Ascending aorta (tissue), 2 donors: ENCODE measurements at regions of chr2 and their contacts with region 1.

Region 1: GRCh38 chr2:42828487-42829425 is 36.4 kb upstream of the HAAO start:
- DNase-seq: peak in 1 of 2 donors; percentile 83
- H3K4me3 ChIP-seq: no peak overlapping the region
- H3K27ac ChIP-seq: peak overlapping the region; percentile 11 to 56
- H3K4me1 ChIP-seq: peaks cover 0 to 17% of the 10 kb centered on the region in 2 donors
- H3K27me3 ChIP-seq: no peaks in the 10 kb centered on the region
- CTCF ChIP-seq: peak; percentile 87 to 94 (median 91)

Region 2: GRCh38 chr2:42859006-42859552 is 30.3 kb after region 1 on chr2:
- intact Hi-C with region 1: no loop called
- DNase-seq: peak in 1 of 2 donors; percentile 88
- H3K4me3 ChIP-seq: no peak overlapping the region
- H3K27ac ChIP-seq: peak overlapping the region in 1 of 2 donors; percentile 34
- H3K4me1 ChIP-seq: peaks cover 5 to 6% of the 10 kb centered on the region in 2 donors
- H3K27me3 ChIP-seq: no peaks in the 10 kb centered on the region
- CTCF ChIP-seq: peak; percentile 89 to 91 (median 90)

Region 3: DNA sequence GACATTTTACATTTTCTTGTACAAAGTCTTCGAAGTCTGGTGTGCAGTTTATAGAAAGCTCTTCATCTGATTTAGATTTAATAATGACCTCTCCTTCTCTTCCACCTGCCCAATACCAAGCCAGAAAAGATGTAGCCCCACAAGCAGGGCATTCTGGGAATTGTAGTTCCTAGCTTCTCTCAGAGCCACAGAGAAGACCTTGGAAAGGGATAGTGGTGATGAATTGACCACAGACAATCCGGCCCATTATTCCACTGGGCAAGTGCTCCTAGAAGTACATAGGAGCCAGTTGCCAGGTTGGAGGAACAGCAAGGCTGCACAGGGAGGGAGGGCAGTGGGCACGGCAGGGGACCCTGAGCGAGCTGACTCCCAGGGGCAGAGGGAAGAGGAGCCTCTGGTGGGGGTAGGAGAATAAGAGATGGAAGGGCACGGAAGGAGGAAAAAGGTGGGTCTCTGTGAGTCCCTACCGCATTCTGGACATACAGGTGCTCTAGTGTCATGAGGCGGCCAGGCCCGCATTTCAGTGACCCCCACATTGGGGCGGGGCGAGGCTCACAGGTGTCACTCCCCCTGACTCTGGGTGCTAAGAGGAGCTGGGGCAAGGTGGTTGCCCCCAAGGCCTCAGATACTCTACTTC is 116.1 kb after region 1 on chr2:
- intact Hi-C with region 1: loop called (anchors 5 kb)
- DNase-seq: no peak
- H3K4me3 ChIP-seq: no peak overlapping the region
- H3K27ac ChIP-seq: no peak overlapping the region
- H3K4me1 ChIP-seq: peaks cover 0 to 3% of the 10 kb centered on the region in 2 donors
- H3K27me3 ChIP-seq: no peaks in the 10 kb centered on the region
- CTCF ChIP-seq: no peak

Region 4: GRCh38 chr2:43484323-43484930 is 655.7 kb after region 1 on chr2:
- intact Hi-C with region 1: loop called (anchors 2 kb)
- DNase-seq: no peak
- H3K4me3 ChIP-seq: no peak overlapping the region
- H3K27ac ChIP-seq: peak overlapping the region in 1 of 2 donors; percentile 78
- H3K4me1 ChIP-seq: peaks cover 0 to 34% of the 10 kb centered on the region in 2 donors
- H3K27me3 ChIP-seq: no peaks in the 10 kb centered on the region
- CTCF ChIP-seq: peak; percentile 46 to 74 (median 71)

Region 5: GRCh38 chr2:43559391-43560230 is 730.9 kb after region 1 on chr2:
- intact Hi-C with region 1: loop called (anchors 5 kb)
- DNase-seq: no peak
- H3K4me3 ChIP-seq: no peak overlapping the region
- H3K27ac ChIP-seq: no peak overlapping the region
- H3K4me1 ChIP-seq: no peaks in the 10 kb centered on the region
- H3K27me3 ChIP-seq: no peaks in the 10 kb centered on the region
- CTCF ChIP-seq: no peak

Region 6: GRCh38 chr2:43611987-43612894 is 783.5 kb after region 1 on chr2:
- intact Hi-C with region 1: loop called (anchors 1 kb)
- DNase-seq: peak in 1 of 2 donors; percentile 86
- H3K4me3 ChIP-seq: no peak overlapping the region
- H3K27ac ChIP-seq: no peak overlapping the region
- H3K4me1 ChIP-seq: peaks cover 0 to 3% of the 10 kb centered on the region in 2 donors
- H3K27me3 ChIP-seq: no peaks in the 10 kb centered on the region
- CTCF ChIP-seq: peak; percentile 70 to 80 (median 70)